ENCODE measurements at regions of chr6 and their contacts with region 1.

Region 1: DNA sequence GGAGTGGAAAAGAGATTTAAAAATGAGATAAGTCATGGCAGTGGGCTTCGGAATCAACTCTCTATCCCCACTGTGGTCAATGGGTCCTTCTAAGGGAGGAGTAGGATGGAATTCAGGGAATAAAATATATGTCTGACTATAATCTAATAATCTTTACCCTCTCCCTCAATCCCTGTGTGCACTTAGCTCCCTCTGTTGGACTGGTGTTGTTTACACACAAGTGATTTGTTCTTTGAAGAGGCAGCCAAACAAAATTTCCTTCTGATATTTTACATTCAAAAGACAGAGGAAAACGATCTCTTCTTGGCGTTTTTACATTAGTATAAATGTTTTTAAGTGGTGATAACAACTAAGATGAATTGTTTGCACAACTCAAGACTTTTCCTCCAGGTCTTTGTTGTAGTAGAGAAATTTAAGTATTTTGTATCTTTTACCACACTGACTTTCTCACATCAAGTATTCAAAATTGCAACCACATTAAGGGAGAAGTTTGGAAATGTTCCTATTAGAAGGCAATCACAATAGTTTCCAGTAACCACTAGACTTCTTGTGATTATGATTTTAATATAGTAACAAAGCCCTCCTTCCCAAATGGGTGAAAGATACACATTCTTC is 317.8 kb downstream of the CENPW start:
- DNase-seq: peak; percentile 58
- ATAC-seq: peak; percentile 43; the same call in 1 of the 2 replicates
- H3K4me3 ChIP-seq: no peak overlapping the region
- H3K27ac ChIP-seq: no peak overlapping the region
- H3K4me1 ChIP-seq: no peaks in the 10 kb centered on the region
- H3K27me3 ChIP-seq: no peaks in the 10 kb centered on the region
- CTCF ChIP-seq: peak; percentile 68

Region 2: GRCh38 chr6:126361832-126362412 is 295.7 kb before region 1 on chr6:
- CTCF ChIA-PET with region 1: interaction called, 3 read pairs
- POLR2A ChIA-PET with region 1: no interaction called
- intact Hi-C with region 1: loop called (anchors 1 kb)
- DNase-seq: no peak
- ATAC-seq: no peak
- H3K4me3 ChIP-seq: no peak overlapping the region
- H3K27ac ChIP-seq: no peak overlapping the region
- H3K4me1 ChIP-seq: no peaks in the 10 kb centered on the region
- H3K27me3 ChIP-seq: no peaks in the 10 kb centered on the region
- CTCF ChIP-seq: no peak

Region 3: DNA sequence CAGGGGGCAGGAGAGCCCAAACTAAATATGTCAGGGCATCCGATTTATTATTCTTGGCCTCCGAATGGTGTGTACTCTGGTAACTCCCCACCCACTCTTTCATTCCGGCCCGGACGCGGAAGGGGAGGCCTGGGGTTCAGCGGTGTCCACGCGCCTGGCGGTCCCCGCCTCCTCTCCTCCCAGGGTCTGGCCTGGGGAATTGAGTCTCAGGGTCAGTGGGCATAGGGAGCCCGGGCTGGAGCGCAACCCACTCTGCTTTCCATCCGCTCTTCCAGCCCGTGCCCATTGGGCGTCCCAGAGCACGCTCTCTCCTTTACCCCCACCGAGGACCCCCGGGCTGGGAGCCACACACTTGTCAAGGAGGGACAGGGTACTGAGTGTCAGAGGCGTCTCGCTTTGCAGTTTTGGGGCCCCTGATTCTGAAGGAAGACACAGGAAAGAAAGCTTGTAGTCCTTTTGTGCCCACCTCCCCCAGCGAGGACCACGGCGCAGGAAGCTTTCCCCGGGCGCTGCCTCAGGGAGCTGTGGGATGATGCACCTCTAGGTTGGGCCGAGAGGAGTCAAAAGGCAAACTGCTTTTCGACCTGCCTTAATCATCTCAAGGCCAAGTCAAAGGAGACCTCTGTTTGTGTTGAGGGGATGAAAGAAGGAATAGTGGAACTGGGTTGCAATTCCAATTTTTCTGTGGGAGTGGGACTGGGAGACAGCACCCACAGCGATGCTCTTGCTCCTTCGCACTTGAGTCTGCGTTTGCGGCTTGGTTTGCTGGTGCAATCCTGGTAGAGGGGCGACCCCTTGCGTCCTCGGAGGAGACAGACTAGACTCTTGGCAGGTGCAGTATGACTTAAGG is 463.3 kb after region 1 on chr6:
- CTCF ChIA-PET with region 1: no interaction called
- POLR2A ChIA-PET with region 1: no interaction called
- intact Hi-C with region 1: loop called (anchors 5 kb)
- DNase-seq: peak; percentile 64
- ATAC-seq: peak; percentile 72
- H3K4me3 ChIP-seq: no peak overlapping the region
- H3K27ac ChIP-seq: no peak overlapping the region
- H3K4me1 ChIP-seq: no peaks in the 10 kb centered on the region; the same call in 1 of the 2 replicates
- H3K27me3 ChIP-seq: peaks cover 56% of the 10 kb centered on the region
- CTCF ChIP-seq: peak; percentile 83

Measured in PC-3 (cell line).